K562 (cell line): ENCODE measurements at regions of chr13 and their contacts with region 1.

Region 1: DNA sequence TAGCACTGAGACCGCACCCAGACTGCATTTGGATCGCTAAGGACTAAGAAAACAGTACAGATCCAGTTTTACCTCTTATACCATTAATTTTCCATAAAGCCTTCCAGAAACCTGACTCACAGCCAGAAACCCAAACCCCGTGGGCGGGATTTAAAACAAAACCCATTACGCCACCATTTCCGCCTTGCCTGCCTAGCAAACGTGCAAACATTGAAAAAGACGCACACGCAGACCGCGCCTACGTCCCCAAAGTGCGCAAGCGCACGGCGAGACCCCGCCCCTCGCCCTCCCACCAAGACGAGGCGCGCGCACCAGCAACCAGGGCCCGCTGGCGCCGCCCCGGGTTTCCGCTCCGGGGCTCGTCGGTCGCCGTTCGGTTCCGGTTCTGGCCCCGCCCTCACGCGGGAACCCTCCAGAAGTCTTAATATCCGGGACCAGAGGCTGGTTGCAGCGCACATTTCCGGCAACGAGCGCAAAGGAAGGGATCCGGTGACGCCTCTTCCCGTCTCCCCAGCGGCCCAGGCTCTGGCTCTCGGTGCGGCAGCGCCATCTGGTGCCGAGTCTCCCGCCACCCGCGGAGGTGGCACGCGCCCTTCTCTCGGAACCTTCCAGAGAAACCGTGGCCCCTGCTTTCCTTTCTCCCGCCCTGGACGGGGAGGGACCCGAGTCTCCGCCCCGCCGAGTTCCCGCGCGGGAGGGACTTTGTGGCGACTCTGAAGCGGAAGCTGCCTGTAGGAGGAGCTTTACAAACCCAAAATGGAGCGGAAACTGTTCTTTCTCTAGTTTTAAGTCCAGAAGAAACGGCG is 256.9 kb upstream of the STARD13 start:
- DNase-seq: peak; percentile 83 to 93 (median 86)
- ATAC-seq: peak; percentile 97
- H3K4me3 ChIP-seq: peak overlapping the region; percentile 56
- H3K27ac ChIP-seq: peak overlapping the region; percentile 100
- H3K4me1 ChIP-seq: peaks cover 0 to 12% of the 10 kb centered on the region in 2 experiments; a peak in 2 of 5 replicates
- H3K27me3 ChIP-seq: no peaks in the 10 kb centered on the region
- CTCF ChIP-seq: peak; percentile 72 to 81 (median 78)
- EP300 ChIP-seq: no peak
- POLR2A ChIP-seq: peak; percentile 67
- RAD21 ChIP-seq: peak; percentile 79 to 82

Region 2: GRCh38 chr13:33069365-33069764 is 473.1 kb before region 1 on chr13:
- CTCF ChIA-PET with region 1: no interaction called
- POLR2A ChIA-PET with region 1: no interaction called
- in situ Hi-C with region 1: no loop called
- intact Hi-C with region 1: loop called (anchors 10 kb)
- DNase-seq: peak in 3 of 4 experiments; percentile 10 to 17 (median 10)
- ATAC-seq: no peak
- H3K4me3 ChIP-seq: no peak overlapping the region
- H3K27ac ChIP-seq: no peak overlapping the region
- H3K4me1 ChIP-seq: no peaks in the 10 kb centered on the region; a peak in 1 of 5 replicates
- H3K27me3 ChIP-seq: peaks cover 0 to 8% of the 10 kb centered on the region in 2 experiments; a peak in 2 of 5 replicates
- CTCF ChIP-seq: peak in 2 of 3 experiments; percentile 27 to 35; a peak in 2 of 6 replicates
- EP300 ChIP-seq: no peak
- POLR2A ChIP-seq: no peak
- RAD21 ChIP-seq: no peak; a peak in 1 of 4 replicates

Region 3: DNA sequence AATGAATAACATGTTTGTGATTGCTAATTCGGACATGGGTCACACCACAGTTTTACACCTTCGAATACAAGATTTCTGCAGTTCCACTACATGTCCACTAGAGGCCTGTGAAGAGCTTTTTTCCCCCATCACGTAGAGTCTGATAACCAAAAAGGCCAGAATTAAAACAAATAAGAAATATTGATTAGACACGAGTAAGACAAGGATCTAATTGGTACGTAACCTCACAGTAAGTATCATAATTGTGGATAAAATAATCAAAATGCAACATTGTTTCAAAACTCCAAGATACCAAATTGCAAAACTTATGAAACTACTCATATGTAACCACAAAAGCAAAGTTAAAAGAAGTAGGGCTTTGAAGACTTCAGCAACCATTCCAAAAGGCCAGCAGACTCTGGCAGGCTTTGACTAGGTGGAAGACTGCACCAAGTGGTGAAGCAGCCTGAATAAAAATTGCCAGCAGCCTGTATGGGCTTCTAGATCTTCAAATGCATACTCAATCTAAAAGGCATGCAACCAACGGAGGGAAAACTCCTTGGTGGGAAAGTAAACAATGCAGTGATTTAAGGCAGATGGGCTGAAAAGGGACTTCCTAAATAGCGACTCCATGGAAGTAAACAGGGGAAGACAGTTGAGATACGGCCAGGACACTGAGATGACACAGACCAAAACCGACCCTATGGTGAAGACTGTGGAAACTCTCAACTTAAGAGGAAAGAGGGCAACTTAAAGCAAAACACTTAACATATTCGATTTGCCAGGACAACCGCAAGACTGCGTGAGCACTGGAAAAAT is 313.6 kb before region 1 on chr13:
- CTCF ChIA-PET with region 1: no interaction called
- POLR2A ChIA-PET with region 1: no interaction called
- in situ Hi-C with region 1: no loop called
- intact Hi-C with region 1: loop called (anchors 2 kb)
- DNase-seq: peak; percentile 21 to 34 (median 30)
- ATAC-seq: peak; percentile 55; the same call in 1 of the 3 replicates
- H3K4me3 ChIP-seq: no peak overlapping the region
- H3K27ac ChIP-seq: no peak overlapping the region
- H3K4me1 ChIP-seq: no peaks in the 10 kb centered on the region
- H3K27me3 ChIP-seq: no peaks in the 10 kb centered on the region
- CTCF ChIP-seq: peak; percentile 53 to 74 (median 69); a peak in 5 of 6 replicates
- EP300 ChIP-seq: no peak
- POLR2A ChIP-seq: no peak
- RAD21 ChIP-seq: peak; percentile 59 to 73

Region 4: DNA sequence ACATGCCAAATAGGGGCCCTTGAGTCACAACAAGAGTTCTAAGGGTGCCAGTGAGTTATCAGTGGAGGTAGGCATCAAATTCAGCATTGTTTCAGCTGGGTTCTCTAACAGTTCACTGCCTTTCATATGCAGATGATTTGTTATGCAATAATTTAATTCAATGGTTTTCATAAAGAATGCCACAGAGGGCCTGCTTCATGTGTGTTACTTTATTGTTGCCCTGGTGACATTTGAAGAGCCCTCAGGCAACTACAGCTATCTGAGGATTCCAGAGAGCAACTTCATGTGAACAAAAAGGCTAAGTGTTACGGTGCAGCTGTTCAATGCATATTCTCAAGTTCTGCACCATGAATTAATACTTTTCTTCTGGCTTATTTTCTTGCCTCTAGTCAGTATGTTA is 213.8 kb before region 1 on chr13:
- CTCF ChIA-PET with region 1: no interaction called
- POLR2A ChIA-PET with region 1: no interaction called
- in situ Hi-C with region 1: no loop called
- intact Hi-C with region 1: no loop called
- DNase-seq: no peak
- ATAC-seq: no peak
- H3K4me3 ChIP-seq: no peak overlapping the region
- H3K27ac ChIP-seq: no peak overlapping the region
- H3K4me1 ChIP-seq: no peaks in the 10 kb centered on the region
- H3K27me3 ChIP-seq: no peaks in the 10 kb centered on the region
- CTCF ChIP-seq: no peak
- EP300 ChIP-seq: no peak
- POLR2A ChIP-seq: no peak
- RAD21 ChIP-seq: no peak

Region 5: DNA sequence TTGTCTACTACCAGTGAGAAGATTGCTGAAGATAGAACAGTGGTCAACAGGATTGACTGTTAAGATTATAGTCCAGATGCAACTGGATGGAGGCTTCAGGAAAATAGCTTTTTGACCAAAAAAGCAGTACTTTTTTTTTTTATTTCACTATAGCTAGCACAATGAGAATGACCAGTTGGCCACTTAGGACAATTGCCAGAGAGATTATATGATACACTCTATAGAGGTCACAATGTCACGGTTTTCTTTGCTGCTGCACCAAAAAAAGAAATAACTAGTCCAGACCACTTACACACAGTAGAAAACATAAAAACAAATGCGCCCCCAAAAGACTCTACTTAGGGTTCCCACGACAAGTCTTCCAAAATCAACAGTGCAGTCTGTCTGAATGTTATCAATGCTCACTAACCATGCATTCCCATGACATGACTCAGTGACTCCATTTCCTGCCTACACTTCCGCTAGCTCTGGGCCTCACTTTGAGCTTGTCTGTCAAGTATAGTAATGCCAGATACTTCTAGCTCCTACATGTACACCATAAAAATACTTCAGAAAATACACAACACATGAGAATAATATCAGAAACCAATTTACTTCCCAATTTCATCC is 47.8 kb before region 1 on chr13:
- CTCF ChIA-PET with region 1: no interaction called
- POLR2A ChIA-PET with region 1: no interaction called
- in situ Hi-C with region 1: no loop called
- intact Hi-C with region 1: loop called (anchors 5 kb)
- DNase-seq: peak in 3 of 4 experiments; percentile 4 to 39 (median 5)
- ATAC-seq: peak; percentile 74
- H3K4me3 ChIP-seq: no peak overlapping the region
- H3K27ac ChIP-seq: peak overlapping the region; percentile 43; the same call in 1 of the 3 replicates
- H3K4me1 ChIP-seq: peaks cover 0 to 3% of the 10 kb centered on the region in 2 experiments; a peak in 1 of 5 replicates
- H3K27me3 ChIP-seq: no peaks in the 10 kb centered on the region
- CTCF ChIP-seq: no peak
- EP300 ChIP-seq: no peak
- POLR2A ChIP-seq: no peak
- RAD21 ChIP-seq: no peak

Region 6: DNA sequence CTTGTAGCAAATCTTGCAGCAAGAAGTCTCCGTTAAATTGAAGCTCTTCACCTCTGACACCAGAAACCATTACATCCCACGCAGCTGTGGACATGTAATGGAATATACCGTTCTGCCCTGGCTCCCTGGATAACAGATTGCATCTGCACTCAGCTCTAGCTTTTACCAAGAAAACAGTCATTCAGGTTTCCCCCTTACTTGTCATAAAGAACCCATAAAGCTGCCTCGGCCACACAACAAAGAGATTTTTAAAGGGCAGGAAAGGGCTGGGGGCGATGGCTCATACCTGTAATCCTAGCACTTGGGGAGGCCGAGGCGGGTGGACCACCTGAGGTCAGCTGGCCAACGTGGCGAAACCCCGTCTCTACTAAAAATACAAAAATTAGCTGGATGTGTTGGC is 147.9 kb after region 1 on chr13:
- CTCF ChIA-PET with region 1: no interaction called
- POLR2A ChIA-PET with region 1: no interaction called
- in situ Hi-C with region 1: no loop called
- intact Hi-C with region 1: no loop called
- DNase-seq: no peak
- ATAC-seq: no peak
- H3K4me3 ChIP-seq: no peak overlapping the region
- H3K27ac ChIP-seq: no peak overlapping the region
- H3K4me1 ChIP-seq: no peaks in the 10 kb centered on the region
- H3K27me3 ChIP-seq: no peaks in the 10 kb centered on the region
- CTCF ChIP-seq: no peak
- EP300 ChIP-seq: no peak
- POLR2A ChIP-seq: no peak
- RAD21 ChIP-seq: no peak

Region 7: GRCh38 chr13:33723772-33724435 is 181.4 kb after region 1 on chr13:
- CTCF ChIA-PET with region 1: no interaction called
- POLR2A ChIA-PET with region 1: no interaction called
- in situ Hi-C with region 1: no loop called
- intact Hi-C with region 1: loop called (anchors 10 kb)
- DNase-seq: peak; percentile 6 to 59 (median 13)
- ATAC-seq: peak; percentile 86
- H3K4me3 ChIP-seq: no peak overlapping the region
- H3K27ac ChIP-seq: no peak overlapping the region
- H3K4me1 ChIP-seq: no peaks in the 10 kb centered on the region
- H3K27me3 ChIP-seq: no peaks in the 10 kb centered on the region
- CTCF ChIP-seq: peak; percentile 44 to 63 (median 55); a peak in 5 of 6 replicates
- EP300 ChIP-seq: no peak
- POLR2A ChIP-seq: no peak
- RAD21 ChIP-seq: peak; percentile 66 to 81